Common myeloid progenitor, CD34-positive (primary cell): ENCODE measurements at regions of chr3 and their contacts with region 1.

Region 1: GRCh38 chr3:115169808-115170207 is 22.7 kb upstream of the ZBTB20 start:
- DNase-seq: peak in 2 of 3 donors; percentile 37 to 40
- H3K4me3 ChIP-seq: no peak overlapping the region
- H3K27ac ChIP-seq: no peak overlapping the region
- H3K4me1 ChIP-seq: peaks cover 0 to 11% (median 3%) of the 10 kb centered on the region in 4 experiments
- H3K27me3 ChIP-seq: no peaks in the 10 kb centered on the region

Region 2: GRCh38 chr3:115085197-115085865 is 84.5 kb before region 1 on chr3:
- CTCF ChIA-PET with region 1: interaction called, 121 read pairs
- POLR2A ChIA-PET with region 1: no interaction called
- DNase-seq: peak in 1 of 3 donors; percentile 52
- H3K4me3 ChIP-seq: no peak overlapping the region
- H3K27ac ChIP-seq: no peak overlapping the region
- H3K4me1 ChIP-seq: peaks cover 0 to 16% (median 2%) of the 10 kb centered on the region in 4 experiments
- H3K27me3 ChIP-seq: no peaks in the 10 kb centered on the region

Region 3: GRCh38 chr3:115092220-115092791 is 77.5 kb before region 1 on chr3:
- CTCF ChIA-PET with region 1: interaction called, 121 read pairs
- POLR2A ChIA-PET with region 1: no interaction called
- DNase-seq: peak; percentile 84 to 86 (median 85)
- H3K4me3 ChIP-seq: no peak overlapping the region
- H3K27ac ChIP-seq: no peak overlapping the region
- H3K4me1 ChIP-seq: peaks cover 0 to 26% (median 5%) of the 10 kb centered on the region in 4 experiments
- H3K27me3 ChIP-seq: no peaks in the 10 kb centered on the region

Region 4: GRCh38 chr3:115147329-115148141 is 22.3 kb before region 1 on chr3:
- CTCF ChIA-PET with region 1: interaction called, 12 read pairs
- POLR2A ChIA-PET with region 1: interaction called, 5 read pairs
- DNase-seq: peak; percentile 100
- H3K4me3 ChIP-seq: peak overlapping the region; percentile 57 to 94 (median 82)
- H3K27ac ChIP-seq: peak overlapping the region; percentile 95 to 98
- H3K4me1 ChIP-seq: peaks cover 4 to 23% (median 14%) of the 10 kb centered on the region in 4 experiments
- H3K27me3 ChIP-seq: no peaks in the 10 kb centered on the region